Activated CD8-positive, alpha-beta T cell treated with anti-CD3 and anti-CD28 coated beads for 36 hours (primary cell): ENCODE measurements at regions of chr22 and their contacts with region 1.

Region 1: DNA sequence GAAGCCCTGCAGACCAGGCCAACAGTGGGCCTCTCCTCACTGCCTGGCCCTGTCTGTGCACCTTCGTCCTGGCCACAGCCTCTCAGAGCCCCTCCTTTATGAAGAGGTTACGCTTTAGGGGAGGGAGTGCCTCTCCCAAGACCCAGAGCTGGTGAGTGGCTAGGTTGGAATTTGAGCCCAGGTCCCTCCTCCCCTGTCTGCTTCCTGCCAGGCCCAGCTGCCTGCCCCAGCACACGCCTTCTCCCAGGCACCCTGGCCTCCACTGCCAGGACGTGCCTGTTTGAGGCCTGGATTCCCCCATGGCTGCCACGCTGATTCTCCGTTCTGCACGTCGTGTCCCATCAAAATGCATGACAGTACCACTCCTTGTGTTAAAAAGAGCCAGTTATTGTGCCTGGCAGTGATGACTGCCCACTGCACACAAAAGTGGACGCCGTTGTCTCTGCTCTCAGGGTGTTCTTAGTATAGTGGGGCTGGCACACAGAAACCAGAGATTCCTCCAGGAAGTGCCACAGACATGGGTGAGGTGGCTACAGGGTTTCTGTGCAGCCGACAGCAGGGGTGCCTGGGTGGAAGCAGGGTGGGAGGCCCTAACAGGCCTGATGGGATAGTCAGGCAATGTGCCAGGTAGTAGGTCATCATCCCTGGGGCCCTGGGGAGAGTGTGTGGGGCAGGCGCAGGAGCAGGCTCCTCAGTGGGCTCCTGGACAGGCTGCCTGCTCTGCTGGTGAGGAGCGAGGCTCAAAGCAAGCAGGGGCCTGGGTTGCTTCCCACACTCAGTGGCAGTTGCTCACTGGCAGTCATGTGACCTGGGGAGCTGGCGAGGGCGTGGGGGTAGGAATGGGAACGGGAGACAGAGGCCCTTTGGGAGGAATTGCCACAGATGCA is 24.1 kb downstream of the MED15 start:
- DNase-seq: no peak
- ATAC-seq: peak; percentile 25
- H3K4me3 Mint-ChIP-seq: no peak overlapping the region
- H3K27ac Mint-ChIP-seq: peak overlapping the region; percentile 63
- H3K4me1 Mint-ChIP-seq: peaks cover 73% of the 10 kb centered on the region
- H3K27me3 Mint-ChIP-seq: no peaks in the 10 kb centered on the region
- CTCF ChIP-seq: no peak

Region 2: DNA sequence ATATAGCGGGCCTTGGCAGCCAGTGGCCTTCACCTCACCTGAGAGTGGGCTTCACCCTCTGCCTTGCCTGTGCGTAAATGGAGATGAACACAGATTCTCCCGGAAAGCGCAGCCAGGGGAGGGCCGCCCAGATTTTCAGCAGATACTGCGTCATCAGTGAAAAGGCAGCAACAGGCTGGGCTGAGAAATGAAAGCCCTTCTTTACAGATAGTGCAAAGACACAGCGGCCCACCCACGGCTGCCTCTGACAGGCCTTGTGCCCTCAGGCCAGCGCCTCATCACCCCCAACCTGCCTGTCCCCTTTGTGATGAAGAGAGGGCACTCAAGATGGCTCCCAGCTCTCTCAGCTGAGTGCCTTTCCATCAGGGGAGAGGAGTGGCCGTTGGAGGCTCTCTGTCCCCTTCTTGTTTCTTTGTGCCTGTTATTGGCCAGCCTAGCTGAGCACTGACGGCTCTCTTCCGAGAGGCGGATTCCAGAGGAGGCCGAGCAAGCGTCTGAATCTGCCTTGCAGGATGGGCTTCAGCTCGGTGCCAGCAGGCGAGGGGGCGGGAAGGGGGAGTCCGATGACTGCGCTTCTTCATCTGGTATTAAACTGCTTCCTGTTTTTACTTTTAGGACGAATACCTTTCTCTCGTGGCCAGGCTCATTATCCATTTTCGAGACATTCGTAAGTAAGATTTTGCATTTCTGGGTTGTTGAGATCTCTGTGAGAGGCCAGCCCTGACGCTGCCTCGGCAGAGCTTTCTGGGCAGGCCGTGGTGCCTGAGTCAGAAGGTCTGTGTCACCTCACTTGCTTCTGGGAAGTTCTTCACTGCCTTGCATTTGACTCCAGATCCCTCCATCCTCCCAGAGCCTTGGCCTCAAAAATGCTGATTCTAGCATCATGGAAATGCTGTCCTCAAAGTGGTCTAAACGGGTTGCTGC is 19.5 kb after region 1 on chr22:
- CTCF ChIA-PET with region 1: interaction called, 4 read pairs
- POLR2A ChIA-PET with region 1: interaction called, 22 read pairs
- intact Hi-C with region 1: no loop called
- DNase-seq: peak; percentile 88
- ATAC-seq: peak; percentile 70
- H3K4me3 Mint-ChIP-seq: peak overlapping the region; percentile 65
- H3K27ac Mint-ChIP-seq: peak overlapping the region; percentile 97
- H3K4me1 Mint-ChIP-seq: peaks cover 84% of the 10 kb centered on the region
- H3K27me3 Mint-ChIP-seq: no peaks in the 10 kb centered on the region
- CTCF ChIP-seq: no peak

Region 3: DNA sequence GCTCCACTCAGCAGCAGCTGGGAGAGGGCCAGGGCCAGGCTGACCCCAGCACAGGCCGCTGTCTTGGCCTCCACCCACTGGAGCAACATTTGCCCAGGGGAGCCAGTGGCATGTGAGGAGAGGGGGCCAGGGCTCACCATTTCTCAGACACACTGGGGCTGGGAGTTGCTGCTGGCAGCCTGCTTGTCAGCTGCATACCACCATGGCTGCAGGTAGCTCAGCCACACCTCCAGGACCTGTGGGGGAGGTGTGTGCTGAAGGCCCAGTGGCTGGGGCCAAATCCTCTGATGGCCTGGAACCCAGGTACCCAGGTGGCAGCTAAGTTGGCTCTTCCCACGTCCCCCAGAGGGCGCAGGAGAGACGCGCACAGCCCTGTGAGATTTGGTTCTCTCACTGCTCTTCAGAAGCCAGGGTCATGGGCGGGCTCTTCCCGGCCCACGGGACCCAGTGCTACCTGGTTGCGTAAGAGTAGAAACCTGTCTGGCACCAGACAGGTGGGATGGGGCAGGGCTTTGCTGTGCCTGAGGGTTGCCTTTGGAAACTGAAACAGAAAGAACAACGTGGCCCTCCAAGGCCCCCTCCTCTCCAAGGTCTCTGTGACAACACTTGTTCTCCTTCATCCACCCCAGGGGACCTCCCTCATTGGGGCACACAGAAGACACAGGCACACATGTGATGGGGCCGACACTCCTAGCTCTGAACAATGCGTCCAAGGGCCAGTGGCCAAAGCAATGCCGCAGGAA is 74.7 kb after region 1 on chr22:
- CTCF ChIA-PET with region 1: no interaction called
- POLR2A ChIA-PET with region 1: no interaction called
- intact Hi-C with region 1: no loop called
- DNase-seq: peak; percentile 84
- ATAC-seq: peak; percentile 94
- H3K4me3 Mint-ChIP-seq: no peak overlapping the region
- H3K27ac Mint-ChIP-seq: no peak overlapping the region
- H3K4me1 Mint-ChIP-seq: peaks cover 10% of the 10 kb centered on the region
- H3K27me3 Mint-ChIP-seq: no peaks in the 10 kb centered on the region
- CTCF ChIP-seq: peak; percentile 90

Region 4: GRCh38 chr22:20656902-20657836 is 125.6 kb after region 1 on chr22:
- CTCF ChIA-PET with region 1: no interaction called
- POLR2A ChIA-PET with region 1: no interaction called
- intact Hi-C with region 1: no loop called
- DNase-seq: no peak
- ATAC-seq: no peak
- H3K4me3 Mint-ChIP-seq: no peak overlapping the region
- H3K27ac Mint-ChIP-seq: no peak overlapping the region
- H3K4me1 Mint-ChIP-seq: no peaks in the 10 kb centered on the region
- H3K27me3 Mint-ChIP-seq: peaks cover 11% of the 10 kb centered on the region
- CTCF ChIP-seq: no peak